ENCODE measurements at regions of chr10 and their contacts with region 1.

Region 1: DNA sequence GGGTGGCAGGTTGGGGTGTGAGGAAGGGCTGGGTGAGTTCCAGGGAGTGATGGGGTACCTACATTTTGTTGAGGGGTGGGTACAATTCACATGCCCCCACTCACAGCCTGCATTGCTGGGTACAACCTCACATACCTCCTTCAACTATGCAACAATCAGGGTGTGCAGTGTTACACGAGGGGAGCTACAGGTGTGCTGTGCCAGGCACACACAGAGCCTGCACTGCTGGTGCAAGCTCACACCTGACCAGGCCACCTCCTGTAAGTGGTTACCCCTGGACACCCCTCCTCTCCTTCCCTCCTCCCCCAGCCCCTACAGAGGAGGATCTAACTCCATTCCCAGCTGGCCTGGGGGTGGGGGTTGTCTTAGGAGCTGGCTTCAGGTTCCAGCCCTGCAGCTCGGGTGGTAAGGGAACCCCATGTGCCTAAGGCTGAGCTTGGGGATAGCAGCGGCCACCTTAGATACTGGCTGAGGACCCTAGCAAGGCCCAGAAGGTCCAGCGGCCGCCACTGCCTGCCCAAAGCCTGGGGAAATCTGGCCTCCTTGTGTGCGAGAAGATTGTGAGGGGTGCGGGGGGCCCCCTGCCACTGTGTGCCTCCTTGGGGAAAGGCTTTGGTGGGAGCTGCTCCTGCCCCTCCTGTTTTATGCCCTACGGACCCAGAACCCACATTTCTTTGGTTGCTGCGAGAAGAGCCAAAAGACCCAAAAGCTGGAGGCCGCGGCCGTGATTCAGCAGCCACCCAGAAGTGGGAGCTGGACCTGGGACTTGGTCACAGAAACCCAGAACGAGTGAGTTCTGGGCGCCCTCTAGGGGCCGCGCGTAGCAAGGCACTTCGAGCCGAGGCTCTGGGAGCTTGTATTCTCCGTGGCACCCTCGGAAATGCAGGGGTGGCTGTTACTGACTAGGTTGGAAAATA is 10.8 kb downstream of the TLX1 start:
- DNase-seq: peak; percentile 82 to 94
- ATAC-seq: peak; percentile 87 to 96
- H3K4me3 ChIP-seq: no peak overlapping the region
- H3K27ac ChIP-seq: peak overlapping the region; percentile 53 to 83
- H3K4me1 ChIP-seq: 0 out of 3 replicates have a peak, but pooled peaks cover 3% of the 10 kb centered on the region
- CTCF ChIP-seq: peak; percentile 94
- EP300 ChIP-seq: no peak
- POLR2A ChIP-seq: no peak
- RAD21 ChIP-seq: peak; percentile 91 to 92

Region 2: GRCh38 chr10:99888622-99889021 is 1253.3 kb before region 1 on chr10:
- CTCF ChIA-PET with region 1: no interaction called
- POLR2A ChIA-PET with region 1: no interaction called
- DNase-seq: no peak
- ATAC-seq: no peak
- H3K4me3 ChIP-seq: no peak overlapping the region
- H3K27ac ChIP-seq: no peak overlapping the region
- H3K4me1 ChIP-seq: no peaks in the 10 kb centered on the region
- CTCF ChIP-seq: no peak
- EP300 ChIP-seq: no peak
- POLR2A ChIP-seq: no peak
- RAD21 ChIP-seq: no peak

Region 3: GRCh38 chr10:100912605-100913469 is 229.0 kb before region 1 on chr10 and contains the start of gene SLF2:
- CTCF ChIA-PET with region 1: no interaction called
- POLR2A ChIA-PET with region 1: no interaction called
- DNase-seq: peak; percentile 98 to 99
- ATAC-seq: peak; percentile 96 to 97
- H3K4me3 ChIP-seq: peak within 1 kb of the TSS; percentile 87
- H3K27ac ChIP-seq: peak within 1 kb of the TSS; percentile 96 to 97
- H3K4me1 ChIP-seq: peaks cover 29% of the 10 kb centered on the region; the same call in 2 of the 3 replicates
- CTCF ChIP-seq: no peak
- EP300 ChIP-seq: no peak; a peak in 1 of 5 replicates
- POLR2A ChIP-seq: peak; percentile 65
- RAD21 ChIP-seq: no peak
- polyA plus RNA-seq, gene SLF2: 12.4 and 16.6 TPM in 2 replicates

Region 4: GRCh38 chr10:101042667-101043355 is 99.1 kb before region 1 on chr10:
- CTCF ChIA-PET with region 1: interaction called, 52 read pairs
- POLR2A ChIA-PET with region 1: interaction called, 7 read pairs
- DNase-seq: peak; percentile 95 to 96
- ATAC-seq: peak; percentile 89 to 93
- H3K4me3 ChIP-seq: peak overlapping the region; percentile 47
- H3K27ac ChIP-seq: peak overlapping the region; percentile 83 to 93
- H3K4me1 ChIP-seq: peaks cover 24% of the 10 kb centered on the region
- CTCF ChIP-seq: no peak
- EP300 ChIP-seq: no peak
- POLR2A ChIP-seq: peak; percentile 55
- RAD21 ChIP-seq: no peak

Region 5: DNA sequence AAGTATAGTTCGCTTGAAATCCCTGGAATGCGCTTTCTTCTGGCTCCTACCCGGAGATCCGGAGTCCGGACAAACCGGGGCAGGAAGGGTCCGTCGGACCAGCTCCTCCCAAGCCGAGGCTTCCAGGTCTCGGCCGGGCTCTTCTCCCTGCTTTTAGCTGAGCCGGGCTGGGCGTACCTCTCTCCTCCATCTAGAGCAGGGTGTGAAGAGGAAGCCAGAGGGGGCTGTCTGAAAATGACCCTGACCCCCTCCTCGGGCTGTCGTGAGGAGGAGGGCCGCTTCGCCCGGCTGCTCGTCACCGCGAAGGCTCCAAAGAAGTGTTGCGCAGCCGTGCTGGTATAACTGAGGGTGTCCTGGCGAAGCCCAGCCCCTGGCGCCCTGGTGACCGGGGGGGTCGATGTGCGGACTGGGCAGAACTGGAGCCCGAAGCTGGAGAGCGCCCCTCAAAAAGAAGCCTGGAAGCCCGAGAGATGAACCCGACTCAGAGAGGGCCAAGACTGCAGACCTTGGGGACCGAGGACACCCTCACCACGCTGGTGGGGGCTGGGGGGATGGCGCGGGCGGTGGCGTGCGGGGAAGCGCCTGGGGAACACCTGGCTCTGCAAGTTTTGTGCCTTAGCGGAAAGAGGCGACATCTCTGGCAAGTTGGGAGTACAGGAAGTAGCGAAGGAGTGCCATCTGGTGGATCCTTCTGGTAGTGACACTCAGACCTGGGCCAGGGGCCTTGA is 74.4 kb before region 1 on chr10:
- CTCF ChIA-PET with region 1: interaction called, 39 read pairs
- POLR2A ChIA-PET with region 1: interaction called, 3 read pairs
- DNase-seq: peak; percentile 84 to 90
- ATAC-seq: peak; percentile 37 to 67
- H3K4me3 ChIP-seq: peak overlapping the region; percentile 57
- H3K27ac ChIP-seq: peak overlapping the region; percentile 87 to 91
- H3K4me1 ChIP-seq: peaks cover 21% of the 10 kb centered on the region
- CTCF ChIP-seq: peak; percentile 89
- EP300 ChIP-seq: no peak
- POLR2A ChIP-seq: peak; percentile 21; the same call in 1 of the 2 replicates
- RAD21 ChIP-seq: peak; percentile 78 to 82

Region 6: DNA sequence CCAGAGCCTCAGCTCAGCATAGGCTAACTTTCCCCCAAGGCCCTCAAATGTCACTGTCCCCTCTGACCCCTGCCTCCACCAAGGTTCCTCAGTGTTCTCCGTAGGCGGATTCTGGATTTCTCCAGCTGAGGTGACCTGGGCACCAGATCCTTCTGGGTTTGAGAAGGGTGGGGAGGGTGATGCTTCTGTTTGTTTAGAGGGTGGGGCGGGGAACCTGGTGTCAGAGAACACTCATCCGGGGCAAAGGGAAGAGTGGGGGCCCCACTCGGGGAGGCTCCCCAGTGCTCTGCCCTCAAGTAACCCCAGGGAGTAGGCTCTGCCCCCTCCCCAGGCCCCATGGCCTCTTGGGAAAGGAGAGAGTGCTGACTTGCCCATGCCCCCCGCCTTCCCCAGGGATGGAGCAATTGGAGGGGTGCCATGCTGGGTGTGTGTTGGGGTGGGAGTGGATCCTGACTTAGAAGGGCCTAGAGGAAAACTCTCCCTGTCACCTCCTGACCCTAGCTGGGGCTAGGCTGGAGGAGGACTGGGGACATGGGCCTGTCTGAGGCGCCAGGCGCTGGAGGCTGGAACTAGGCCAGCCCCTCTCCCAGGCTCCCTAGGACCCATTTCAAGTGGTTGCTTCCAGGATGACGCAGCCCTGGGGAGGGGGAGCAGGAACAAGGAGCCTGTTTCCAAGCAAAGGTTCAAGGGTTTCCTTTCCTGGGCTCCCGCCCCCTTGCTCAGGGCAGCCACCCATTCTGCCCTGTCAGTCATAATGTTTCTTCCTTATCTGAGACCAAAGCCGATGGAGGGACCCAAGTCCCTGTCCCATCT is 52.2 kb before region 1 on chr10:
- CTCF ChIA-PET with region 1: interaction called, 463 read pairs
- POLR2A ChIA-PET with region 1: interaction called, 5 read pairs
- DNase-seq: peak in 1 of 2 experiments; percentile 39
- ATAC-seq: no peak
- H3K4me3 ChIP-seq: no peak overlapping the region
- H3K27ac ChIP-seq: peak overlapping the region; percentile 62 to 73; a peak in 5 of 6 replicates
- H3K4me1 ChIP-seq: peaks cover 63% of the 10 kb centered on the region
- CTCF ChIP-seq: no peak
- EP300 ChIP-seq: no peak
- POLR2A ChIP-seq: no peak
- RAD21 ChIP-seq: no peak

Region 7: GRCh38 chr10:101123085-101123814 is 18.6 kb before region 1 on chr10:
- CTCF ChIA-PET with region 1: interaction called, 34 read pairs
- POLR2A ChIA-PET with region 1: no interaction called
- DNase-seq: no peak
- ATAC-seq: no peak
- H3K4me3 ChIP-seq: no peak overlapping the region
- H3K27ac ChIP-seq: no peak overlapping the region
- H3K4me1 ChIP-seq: no peaks in the 10 kb centered on the region
- CTCF ChIP-seq: no peak
- EP300 ChIP-seq: no peak
- POLR2A ChIP-seq: no peak
- RAD21 ChIP-seq: no peak

Region 8: GRCh38 chr10:101161494-101162299 is 19.8 kb after region 1 on chr10:
- CTCF ChIA-PET with region 1: interaction called, 61 read pairs
- POLR2A ChIA-PET with region 1: no interaction called
- DNase-seq: peak; percentile 80 to 87
- ATAC-seq: peak; percentile 94 to 96
- H3K4me3 ChIP-seq: peak overlapping the region; percentile 44
- H3K27ac ChIP-seq: peak overlapping the region in 1 of 2 experiments; percentile 49; a peak in 1 of 6 replicates
- H3K4me1 ChIP-seq: 0 out of 3 replicates have a peak, but pooled peaks cover 6% of the 10 kb centered on the region
- CTCF ChIP-seq: peak; percentile 95
- EP300 ChIP-seq: no peak
- POLR2A ChIP-seq: no peak
- RAD21 ChIP-seq: peak; percentile 90 to 91

Region 9: DNA sequence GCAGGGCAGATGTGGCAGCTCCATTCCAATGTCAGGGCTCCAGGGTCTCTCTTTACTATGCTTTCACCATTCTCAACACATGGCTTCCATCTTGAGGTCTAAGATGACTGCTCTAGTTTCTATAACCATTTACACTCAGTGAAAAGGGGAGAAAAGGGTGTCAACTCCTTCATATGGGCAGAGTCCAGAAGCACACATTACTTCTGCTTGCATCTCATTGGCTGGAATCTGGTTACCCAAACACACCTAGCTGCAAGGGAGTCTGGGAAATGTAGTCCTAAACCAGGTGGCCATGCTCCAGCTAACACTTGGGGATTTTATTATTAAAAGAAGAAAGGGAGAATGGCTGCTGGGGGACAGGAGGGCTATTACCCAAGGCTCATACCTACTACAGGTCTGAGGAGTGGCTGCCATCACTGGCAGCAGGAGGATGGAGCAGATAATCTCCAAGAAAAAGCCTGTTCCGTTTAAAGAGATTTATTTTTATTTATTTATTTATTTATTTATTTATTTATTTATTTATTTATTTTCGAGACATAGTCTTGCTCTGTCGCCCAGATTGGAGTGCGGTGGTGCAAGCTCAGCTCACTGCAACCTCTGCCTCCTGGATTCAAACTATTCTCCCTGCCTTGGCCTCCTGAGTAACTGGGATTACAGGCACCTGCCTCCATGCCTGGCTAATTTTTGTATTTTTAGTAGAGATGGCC is 116.5 kb after region 1 on chr10:
- CTCF ChIA-PET with region 1: no interaction called
- POLR2A ChIA-PET with region 1: no interaction called
- DNase-seq: peak in 1 of 2 experiments; percentile 27
- ATAC-seq: no peak
- H3K4me3 ChIP-seq: no peak overlapping the region
- H3K27ac ChIP-seq: no peak overlapping the region
- H3K4me1 ChIP-seq: no peaks in the 10 kb centered on the region
- CTCF ChIP-seq: no peak
- EP300 ChIP-seq: no peak
- POLR2A ChIP-seq: no peak
- RAD21 ChIP-seq: no peak

Measured in A549 (cell line).